T-cell (primary cell): ENCODE measurements at regions of chr17 and their contacts with region 1.

Region 1: GRCh38 chr17:1661045-1661444 is 11.4 kb upstream of the RILP start:
- DNase-seq: no peak
- ATAC-seq: no peak
- H3K4me3 ChIP-seq: no peak overlapping the region
- H3K4me3 Mint-ChIP-seq: no peak overlapping the region
- H3K27ac ChIP-seq: no peak overlapping the region
- H3K27ac Mint-ChIP-seq: no peak overlapping the region
- H3K4me1 ChIP-seq: no peaks in the 10 kb centered on the region
- H3K4me1 Mint-ChIP-seq: peaks cover 2 to 10% (median 6%) of the 10 kb centered on the region in 3 donors
- H3K27me3 ChIP-seq: no peaks in the 10 kb centered on the region
- H3K27me3 Mint-ChIP-seq: no peaks in the 10 kb centered on the region

Region 2: GRCh38 chr17:1611715-1612114 is 49.3 kb before region 1 on chr17:
- CTCF ChIA-PET with region 1: no interaction called
- POLR2A ChIA-PET with region 1: no interaction called
- DNase-seq: no peak
- ATAC-seq: no peak
- H3K4me3 ChIP-seq: no peak overlapping the region
- H3K4me3 Mint-ChIP-seq: no peak overlapping the region
- H3K27ac ChIP-seq: no peak overlapping the region
- H3K27ac Mint-ChIP-seq: no peak overlapping the region
- H3K4me1 ChIP-seq: peaks cover 0 to 7% of the 10 kb centered on the region in 2 experiments
- H3K4me1 Mint-ChIP-seq: peaks cover 0 to 4% (median 0%) of the 10 kb centered on the region in 3 donors
- H3K27me3 ChIP-seq: peaks cover 0 to 4% of the 10 kb centered on the region in 2 experiments
- H3K27me3 Mint-ChIP-seq: no peaks in the 10 kb centered on the region

Region 3: DNA sequence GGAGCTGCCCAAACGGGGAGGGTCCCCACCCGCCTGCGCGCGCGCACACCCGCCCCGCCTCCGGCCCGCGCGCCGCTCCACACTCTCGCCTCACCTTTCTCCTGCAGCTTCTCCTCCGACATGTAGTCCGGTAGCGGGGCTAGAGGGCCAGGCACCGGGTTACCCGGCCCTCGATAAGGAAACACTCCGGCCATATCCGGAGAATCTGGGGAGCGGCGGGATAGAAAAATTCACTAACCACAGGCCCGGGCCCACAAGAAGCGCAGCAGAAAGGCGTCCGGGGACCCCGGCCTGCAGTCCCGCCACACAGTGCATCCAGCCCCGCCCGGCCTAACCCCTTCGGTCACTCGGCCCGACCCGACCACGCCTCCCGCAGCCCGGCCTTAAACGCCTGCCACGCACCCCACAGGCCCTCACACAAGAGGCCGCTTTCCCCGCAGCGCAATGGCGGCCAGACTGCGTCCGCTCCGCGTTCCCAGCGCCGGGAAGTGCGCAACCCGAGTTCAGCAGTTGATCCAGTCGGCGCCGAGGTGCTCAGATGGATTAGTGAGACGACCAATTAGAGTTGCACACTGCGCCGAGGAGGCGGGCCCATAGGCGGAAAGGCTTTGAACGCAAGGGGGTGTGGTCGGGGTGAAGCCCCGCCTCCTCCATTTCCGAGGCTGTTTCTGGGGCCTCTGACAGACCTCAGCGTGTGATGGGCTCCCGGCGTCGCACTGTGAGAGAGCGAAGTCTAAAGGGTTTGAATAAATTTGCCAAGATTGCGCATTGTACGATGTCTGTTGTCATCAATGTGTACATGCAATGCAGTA is 23.5 kb after region 1 on chr17 and contains the start of gene PRPF8:
- CTCF ChIA-PET with region 1: interaction called, 4 to 14 read pairs
- POLR2A ChIA-PET with region 1: interaction called, 4 read pairs
- DNase-seq: peak; percentile 94 to 99 (median 97)
- ATAC-seq: peak; percentile 98 to 99 (median 99)
- H3K4me3 ChIP-seq: peak within 1 kb of the TSS; percentile 91 to 92
- H3K4me3 Mint-ChIP-seq: peak within 1 kb of the TSS; percentile 97 to 99 (median 99)
- H3K27ac ChIP-seq: peak within 1 kb of the TSS; percentile 94
- H3K27ac Mint-ChIP-seq: peak within 1 kb of the TSS; percentile 100
- H3K4me1 ChIP-seq: peaks cover 9 to 29% of the 10 kb centered on the region in 2 experiments
- H3K4me1 Mint-ChIP-seq: peaks cover 46 to 52% (median 49%) of the 10 kb centered on the region in 3 donors
- H3K27me3 ChIP-seq: no peaks in the 10 kb centered on the region
- H3K27me3 Mint-ChIP-seq: no peaks in the 10 kb centered on the region
- total RNA-seq, gene PRPF8: 387 to 543 (median 409) TPM

Region 4: DNA sequence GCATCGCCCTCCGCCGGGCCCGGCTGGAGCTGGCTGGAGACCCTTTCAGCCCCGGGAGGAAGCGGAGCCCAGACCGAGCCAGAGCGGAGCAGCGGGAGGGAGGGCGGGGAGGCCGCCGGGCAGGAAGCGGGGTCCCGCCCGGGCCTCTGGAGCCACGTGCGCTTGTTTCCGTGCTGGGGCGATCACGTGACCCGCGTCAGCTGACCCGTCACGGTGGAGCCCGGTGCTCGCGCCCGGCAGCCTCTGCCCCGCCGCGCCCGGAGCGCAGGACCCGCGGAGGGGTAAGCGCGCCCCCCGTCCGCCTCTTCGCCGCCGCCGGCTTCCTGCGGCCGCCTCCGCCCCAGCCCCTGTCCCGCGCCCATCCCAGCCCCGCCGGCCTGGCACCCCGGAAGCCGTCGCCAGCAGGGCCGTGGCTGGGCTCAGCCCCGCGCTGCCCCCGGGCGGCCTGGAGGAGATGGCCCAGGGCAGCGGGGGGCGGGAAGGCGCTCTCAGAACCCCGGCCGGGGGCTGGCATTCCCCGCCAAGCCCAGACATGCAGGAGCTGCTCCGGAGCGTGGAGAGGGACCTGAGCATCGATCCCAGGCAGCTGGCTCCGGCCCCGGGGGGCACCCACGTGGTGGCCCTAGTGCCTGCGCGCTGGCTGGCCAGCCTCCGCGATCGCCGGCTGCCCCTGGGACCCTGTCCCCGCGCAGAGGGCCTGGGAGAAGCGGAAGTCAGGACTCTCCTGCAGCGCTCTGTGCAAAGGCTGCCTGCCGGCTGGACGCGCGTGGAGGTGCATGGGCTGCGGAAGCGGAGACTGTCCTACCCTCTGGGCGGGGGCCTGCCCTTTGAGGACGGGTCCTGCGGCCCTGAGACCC is 63.7 kb after region 1 on chr17 and contains the start of gene WDR81:
- CTCF ChIA-PET with region 1: no interaction called
- POLR2A ChIA-PET with region 1: no interaction called
- DNase-seq: peak; percentile 67 to 91 (median 80)
- ATAC-seq: peak; percentile 83 to 89 (median 87)
- H3K4me3 ChIP-seq: peak within 1 kb of the TSS; percentile 58 to 61
- H3K4me3 Mint-ChIP-seq: peak within 1 kb of the TSS; percentile 75 to 82 (median 76)
- H3K27ac ChIP-seq: peak within 1 kb of the TSS; percentile 55
- H3K27ac Mint-ChIP-seq: peak within 1 kb of the TSS; percentile 72 to 82
- H3K4me1 ChIP-seq: peaks cover 22 to 84% of the 10 kb centered on the region in 2 experiments
- H3K4me1 Mint-ChIP-seq: peaks cover 36 to 55% (median 54%) of the 10 kb centered on the region in 3 donors
- H3K27me3 ChIP-seq: no peaks in the 10 kb centered on the region
- H3K27me3 Mint-ChIP-seq: no peaks in the 10 kb centered on the region
- total RNA-seq, gene WDR81: 41.4 to 76.0 (median 63.1) TPM